Cardiac septum (tissue), 1 donor: ENCODE measurements at regions of chr7 and their contacts with region 1.

Region 1: DNA sequence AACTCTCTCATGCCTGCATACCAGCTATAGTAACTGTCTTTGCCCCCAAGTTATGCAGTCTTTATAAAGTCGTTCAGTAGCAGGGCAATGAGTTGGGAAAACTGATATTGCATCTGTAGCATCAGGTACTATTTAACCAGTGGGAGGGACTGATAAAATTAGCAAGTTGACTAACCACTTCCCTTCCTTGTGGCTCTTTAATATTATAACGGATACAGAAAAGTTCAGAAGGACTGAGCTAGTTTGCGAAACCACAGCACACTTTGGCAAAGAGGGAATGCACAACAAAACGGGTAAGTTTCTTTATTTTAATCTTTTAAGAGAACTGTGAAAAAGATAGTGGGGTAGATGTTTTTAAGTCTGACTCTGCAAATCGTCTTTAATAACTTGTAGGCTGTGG is 205.3 kb upstream of the HDAC9 start:
- DNase-seq: no peak

Region 2: GRCh38 chr7:18086165-18087030 is 203.8 kb before region 1 on chr7:
- intact Hi-C with region 1: loop called (anchors 10 kb)
- DNase-seq: peak; percentile 79

Region 3: GRCh38 chr7:18151422-18151821 is 138.8 kb before region 1 on chr7:
- intact Hi-C with region 1: no loop called
- DNase-seq: no peak

Region 4: DNA sequence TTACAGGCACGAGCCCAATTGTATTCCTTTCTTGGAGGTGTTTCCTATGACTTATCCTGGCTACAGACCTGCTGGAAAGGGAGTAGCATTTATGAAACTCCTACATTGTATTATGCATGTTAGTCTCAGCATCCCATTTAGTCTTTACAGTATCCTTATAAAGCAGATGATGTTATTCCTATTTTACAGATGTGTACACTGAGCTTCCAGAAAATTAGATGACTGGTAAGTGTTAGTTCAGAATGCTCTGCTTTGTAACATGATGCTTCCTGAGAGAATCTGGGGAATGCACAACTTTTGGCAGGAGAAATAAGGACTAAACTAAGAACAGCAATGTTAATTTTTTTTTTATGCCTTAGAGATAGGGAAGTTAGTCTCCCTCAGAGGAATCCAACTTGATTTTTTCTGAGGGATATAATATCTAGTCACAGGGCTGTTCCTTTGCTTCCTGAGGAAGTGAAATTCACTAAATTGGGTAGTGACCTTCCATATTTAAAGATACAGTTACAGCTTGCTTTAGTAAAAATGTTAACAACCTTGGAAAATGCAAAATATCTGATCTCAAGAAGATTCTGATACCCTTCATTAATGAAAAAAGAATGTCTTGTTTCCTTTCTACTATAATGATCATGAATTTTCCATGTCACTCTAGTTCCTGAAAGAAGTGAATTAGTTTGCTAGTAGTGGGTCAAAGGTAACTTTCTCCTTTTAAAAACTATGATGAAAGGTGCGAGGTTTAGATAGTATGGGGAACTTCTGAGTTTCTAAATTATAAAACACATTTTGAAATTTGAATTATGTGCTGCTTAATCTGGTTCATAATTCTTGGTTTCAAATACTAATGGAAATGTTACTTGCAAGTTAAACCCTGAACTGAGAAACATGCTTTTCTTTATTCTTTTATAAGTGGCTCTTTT is 68.6 kb before region 1 on chr7:
- intact Hi-C with region 1: loop called (anchors 5 kb)
- DNase-seq: no peak

Region 5: GRCh38 chr7:18948521-18948920 is 658.3 kb after region 1 on chr7:
- intact Hi-C with region 1: no loop called
- DNase-seq: no peak